ENCODE measurements at regions of chr17 and their contacts with region 1.

Region 1: GRCh38 chr17:73719588-73720071 is 75.4 kb upstream of the SDK2 start:
- DNase-seq: no peak
- H3K4me3 ChIP-seq: no peak overlapping the region
- H3K27ac ChIP-seq: no peak overlapping the region
- H3K4me1 ChIP-seq: peaks cover 0 to 13% (median 0%) of the 10 kb centered on the region in 3 donors
- H3K27me3 ChIP-seq: peaks cover 0 to 37% (median 0%) of the 10 kb centered on the region in 4 donors
- CTCF ChIP-seq: no peak
- POLR2A ChIP-seq: no peak

Region 2: DNA sequence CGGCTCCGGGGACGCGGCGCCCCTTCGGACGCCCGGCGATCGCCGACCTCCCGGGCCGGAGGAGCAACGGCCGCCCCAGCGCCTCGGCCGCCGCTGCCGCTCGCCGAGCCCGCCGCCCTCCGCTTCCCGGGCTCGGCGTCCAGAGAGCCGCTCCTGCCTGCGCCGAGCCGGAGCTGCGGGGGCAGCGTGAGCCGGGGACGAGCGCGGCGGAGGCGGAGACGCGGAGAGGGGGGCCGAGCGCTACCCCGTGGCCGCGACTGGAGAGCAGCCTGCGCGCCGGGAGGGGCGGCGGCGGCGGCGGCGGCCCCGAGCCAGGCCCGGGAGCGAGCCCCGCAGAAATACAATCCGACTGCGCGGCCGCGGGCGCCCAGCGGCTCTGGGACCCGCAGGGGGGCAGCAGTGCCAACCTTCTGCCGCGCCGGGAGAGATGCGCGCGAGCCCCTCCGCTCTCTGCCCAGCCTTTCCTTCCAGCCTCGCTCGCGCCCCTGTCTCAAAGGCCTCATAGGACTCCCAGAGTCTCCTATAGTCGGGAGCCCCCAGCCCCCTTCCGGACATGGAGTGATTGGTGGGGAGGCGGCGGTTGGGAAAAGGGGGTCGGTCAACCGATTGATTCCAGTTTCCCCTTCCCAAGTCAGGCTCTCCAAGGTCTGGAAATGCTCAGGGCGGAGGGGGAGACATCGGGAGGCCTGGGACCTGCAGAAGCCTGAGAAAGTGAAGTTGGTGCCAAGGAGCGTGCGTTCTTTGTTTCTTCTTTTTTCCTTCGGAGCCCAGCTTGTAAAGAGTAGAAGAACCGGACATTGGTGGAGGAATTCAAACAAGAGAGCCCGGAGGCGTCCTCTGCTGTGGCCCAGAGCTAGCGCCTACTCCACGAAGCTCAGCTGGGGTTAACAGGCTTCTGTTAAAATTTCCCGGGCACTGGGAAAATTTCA is 74.3 kb before region 1 on chr17:
- intact Hi-C with region 1: loop called (anchors 5 kb)
- DNase-seq: no peak
- H3K4me3 ChIP-seq: peak overlapping the region; percentile 34 to 68 (median 52)
- H3K27ac ChIP-seq: peak overlapping the region in 2 of 4 donors; percentile 44 to 49
- H3K4me1 ChIP-seq: peaks cover 22 to 43% (median 25%) of the 10 kb centered on the region in 3 donors
- H3K27me3 ChIP-seq: peaks cover 0 to 91% (median 0%) of the 10 kb centered on the region in 4 donors
- CTCF ChIP-seq: no peak
- POLR2A ChIP-seq: no peak

Region 3: DNA sequence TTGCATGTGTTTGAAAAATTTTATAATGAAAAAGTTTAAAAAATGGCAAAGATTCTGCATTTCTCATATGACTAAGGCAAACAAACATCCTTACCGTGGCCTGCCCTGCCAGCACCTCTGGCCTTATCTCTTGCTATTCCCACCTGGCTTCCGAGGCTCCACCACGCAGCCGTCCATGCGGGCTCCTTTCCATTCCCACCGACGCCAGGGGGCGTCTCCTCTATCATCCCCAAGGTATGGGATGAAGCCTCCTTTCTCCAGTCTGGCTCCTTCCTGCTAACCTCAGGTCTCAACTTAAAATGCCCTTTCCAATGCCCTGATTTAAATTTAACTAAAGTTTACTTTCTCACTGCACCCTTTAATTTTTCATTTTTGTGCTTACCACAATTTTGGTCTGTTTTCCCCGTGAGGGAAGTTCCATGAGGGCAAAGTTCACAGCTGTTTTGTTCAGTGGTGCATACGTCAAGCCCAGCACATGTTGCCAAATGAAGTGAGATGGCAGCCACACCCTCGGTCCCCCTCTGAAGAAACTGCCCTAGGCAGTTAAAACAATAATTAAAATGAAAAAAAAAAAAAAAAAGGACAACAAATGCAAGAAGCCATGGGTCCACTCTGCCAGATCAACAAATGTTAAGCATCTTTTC is 62.0 kb before region 1 on chr17:
- intact Hi-C with region 1: no loop called
- DNase-seq: no peak
- H3K4me3 ChIP-seq: no peak overlapping the region
- H3K27ac ChIP-seq: no peak overlapping the region
- H3K4me1 ChIP-seq: peaks cover 0 to 7% (median 0%) of the 10 kb centered on the region in 3 donors
- H3K27me3 ChIP-seq: peaks cover 0 to 16% (median 0%) of the 10 kb centered on the region in 4 donors
- CTCF ChIP-seq: peak; percentile 21 to 61 (median 38)
- POLR2A ChIP-seq: no peak